Activated CD8-positive, alpha-beta T cell treated with anti-CD3 and anti-CD28 coated beads for 36 hours (primary cell): ENCODE measurements at regions of chr17 and their contacts with region 1.

Region 1: GRCh38 chr17:80791758-80792284 is 199.8 kb upstream of the CHMP6 start:
- DNase-seq: peak; percentile 83
- ATAC-seq: peak; percentile 59
- H3K4me3 Mint-ChIP-seq: peak overlapping the region; percentile 58
- H3K27ac Mint-ChIP-seq: peak overlapping the region; percentile 96
- H3K4me1 Mint-ChIP-seq: peaks cover 76% of the 10 kb centered on the region
- H3K27me3 Mint-ChIP-seq: no peaks in the 10 kb centered on the region
- CTCF ChIP-seq: no peak

Region 2: GRCh38 chr17:80632046-80632581 is 159.7 kb before region 1 on chr17:
- CTCF ChIA-PET with region 1: no interaction called
- POLR2A ChIA-PET with region 1: no interaction called
- intact Hi-C with region 1: no loop called
- DNase-seq: no peak
- ATAC-seq: no peak
- H3K4me3 Mint-ChIP-seq: no peak overlapping the region
- H3K27ac Mint-ChIP-seq: no peak overlapping the region
- H3K4me1 Mint-ChIP-seq: peaks cover 7% of the 10 kb centered on the region
- H3K27me3 Mint-ChIP-seq: no peaks in the 10 kb centered on the region
- CTCF ChIP-seq: no peak

Region 3: DNA sequence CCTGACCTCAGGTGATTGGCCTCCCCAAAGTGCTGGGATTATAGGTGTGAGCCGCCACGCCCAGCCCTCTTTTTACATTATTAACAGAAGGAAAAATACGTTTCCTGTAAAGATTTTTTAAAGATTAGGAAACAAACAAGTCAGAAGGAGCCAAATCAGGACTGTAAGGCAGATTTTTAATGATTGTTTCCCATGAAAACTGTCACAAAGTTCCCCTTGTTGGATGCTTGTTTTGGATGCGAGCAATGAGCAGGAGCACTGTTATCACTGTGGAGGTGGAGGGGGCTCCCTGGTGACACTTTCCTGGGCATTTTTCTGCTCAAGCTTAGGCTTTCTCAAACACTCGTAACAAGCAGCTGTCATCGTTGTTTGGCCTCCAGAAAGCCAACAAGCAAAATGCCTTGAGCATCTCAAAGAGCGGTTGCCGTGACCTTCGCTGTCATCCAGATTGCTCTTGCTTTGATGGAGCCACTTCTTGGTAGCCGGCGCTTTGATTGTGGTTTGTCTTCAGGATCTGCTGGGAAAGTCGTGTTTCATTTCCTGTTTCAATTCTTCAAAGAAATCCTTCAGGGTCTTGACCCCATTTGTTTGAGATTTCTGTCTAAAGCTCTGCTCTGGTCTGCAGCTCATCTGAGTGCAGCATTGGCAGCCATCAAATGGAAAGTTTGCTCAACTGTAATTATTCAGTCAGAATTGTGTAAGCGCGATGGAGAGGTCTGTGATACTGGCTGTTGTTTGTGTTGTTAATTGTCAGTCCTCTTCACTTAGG is 118.5 kb before region 1 on chr17:
- CTCF ChIA-PET with region 1: no interaction called
- POLR2A ChIA-PET with region 1: no interaction called
- intact Hi-C with region 1: loop called (anchors 10 kb)
- DNase-seq: peak; percentile 70
- ATAC-seq: peak; percentile 61
- H3K4me3 Mint-ChIP-seq: peak overlapping the region; percentile 22
- H3K27ac Mint-ChIP-seq: peak overlapping the region; percentile 32
- H3K4me1 Mint-ChIP-seq: peaks cover 56% of the 10 kb centered on the region
- H3K27me3 Mint-ChIP-seq: no peaks in the 10 kb centered on the region
- CTCF ChIP-seq: no peak

Region 4: GRCh38 chr17:80780381-80781198 is 11.2 kb before region 1 on chr17:
- CTCF ChIA-PET with region 1: interaction called, 7 read pairs
- POLR2A ChIA-PET with region 1: interaction called, 21 read pairs
- intact Hi-C with region 1: no loop called
- DNase-seq: peak; percentile 63
- ATAC-seq: peak; percentile 54
- H3K4me3 Mint-ChIP-seq: peak overlapping the region; percentile 60
- H3K27ac Mint-ChIP-seq: peak overlapping the region; percentile 91
- H3K4me1 Mint-ChIP-seq: peaks cover 80% of the 10 kb centered on the region
- H3K27me3 Mint-ChIP-seq: no peaks in the 10 kb centered on the region
- CTCF ChIP-seq: no peak

Region 5: GRCh38 chr17:80832888-80833583 is 41.2 kb after region 1 on chr17:
- CTCF ChIA-PET with region 1: interaction called, 4 read pairs
- POLR2A ChIA-PET with region 1: interaction called, 5 read pairs
- intact Hi-C with region 1: loop called (anchors 2 kb)
- DNase-seq: peak; percentile 90
- ATAC-seq: peak; percentile 91
- H3K4me3 Mint-ChIP-seq: peak overlapping the region; percentile 77
- H3K27ac Mint-ChIP-seq: peak overlapping the region; percentile 96
- H3K4me1 Mint-ChIP-seq: peaks cover 30% of the 10 kb centered on the region
- H3K27me3 Mint-ChIP-seq: no peaks in the 10 kb centered on the region
- CTCF ChIP-seq: no peak